Caco-2 (cell line): ENCODE measurements at regions of chr11 and their contacts with region 1.

Region 1: GRCh38 chr11:7688238-7688826 is 15.0 kb upstream of the CYB5R2 start:
- DNase-seq: peak in 1 of 2 experiments; percentile 49
- H3K4me3 ChIP-seq: no peak overlapping the region
- H3K4me3 Mint-ChIP-seq: no peak overlapping the region
- H3K27ac Mint-ChIP-seq: no peak overlapping the region
- H3K4me1 ChIP-seq: peaks cover 15% of the 10 kb centered on the region
- H3K4me1 Mint-ChIP-seq: peaks cover 20% of the 10 kb centered on the region
- H3K27me3 ChIP-seq: no peaks in the 10 kb centered on the region
- H3K27me3 Mint-ChIP-seq: no peaks in the 10 kb centered on the region
- CTCF ChIP-seq: peak; percentile 83 to 91

Region 2: DNA sequence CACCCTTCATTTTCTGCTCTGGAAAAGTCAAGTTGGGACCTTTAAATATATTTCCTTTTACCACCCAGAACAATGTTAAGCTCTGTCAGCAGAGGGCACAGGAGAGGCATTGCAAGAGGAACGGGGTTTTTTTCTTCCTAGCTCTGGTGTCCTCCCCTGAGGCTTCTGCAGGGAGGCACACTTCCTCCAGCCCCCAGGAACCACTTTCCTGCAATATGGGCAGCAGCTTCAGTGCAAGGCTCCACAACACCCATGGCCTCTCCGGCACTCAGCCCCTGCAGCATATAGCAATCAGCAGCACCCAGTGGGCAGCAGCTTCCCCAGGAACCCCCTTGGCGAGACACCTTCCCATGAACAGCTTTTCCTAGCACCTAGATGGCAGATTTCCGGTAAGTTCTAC is 335.2 kb before region 1 on chr11:
- CTCF ChIA-PET with region 1: no interaction called
- POLR2A ChIA-PET with region 1: no interaction called
- intact Hi-C with region 1: loop called (anchors 2 kb)
- DNase-seq: peak; percentile 39 to 63
- H3K4me3 ChIP-seq: no peak overlapping the region
- H3K4me3 Mint-ChIP-seq: no peak overlapping the region
- H3K27ac Mint-ChIP-seq: no peak overlapping the region
- H3K4me1 ChIP-seq: no peaks in the 10 kb centered on the region
- H3K4me1 Mint-ChIP-seq: no peaks in the 10 kb centered on the region
- H3K27me3 ChIP-seq: no peaks in the 10 kb centered on the region; the same call in 1 of the 2 replicates
- H3K27me3 Mint-ChIP-seq: peaks cover 15% of the 10 kb centered on the region
- CTCF ChIP-seq: peak; percentile 63 to 76

Region 3: GRCh38 chr11:7467652-7468051 is 220.7 kb before region 1 on chr11:
- CTCF ChIA-PET with region 1: no interaction called
- POLR2A ChIA-PET with region 1: no interaction called
- intact Hi-C with region 1: no loop called
- DNase-seq: no peak
- H3K4me3 ChIP-seq: no peak overlapping the region
- H3K4me3 Mint-ChIP-seq: no peak overlapping the region
- H3K27ac Mint-ChIP-seq: no peak overlapping the region
- H3K4me1 ChIP-seq: no peaks in the 10 kb centered on the region
- H3K4me1 Mint-ChIP-seq: no peaks in the 10 kb centered on the region
- H3K27me3 ChIP-seq: 0 out of 2 replicates have a peak, but pooled peaks cover 1% of the 10 kb centered on the region
- H3K27me3 Mint-ChIP-seq: peaks cover 12% of the 10 kb centered on the region
- CTCF ChIP-seq: no peak

Region 4: GRCh38 chr11:7672960-7673723 is 15.2 kb before region 1 on chr11 and contains the start of gene CYB5R2:
- CTCF ChIA-PET with region 1: no interaction called
- POLR2A ChIA-PET with region 1: no interaction called
- intact Hi-C with region 1: loop called (anchors 1 kb)
- DNase-seq: peak; percentile 75 to 77
- H3K4me3 ChIP-seq: peak within 1 kb of the TSS; percentile 40
- H3K4me3 Mint-ChIP-seq: peak within 1 kb of the TSS; percentile 72
- H3K27ac Mint-ChIP-seq: peak within 1 kb of the TSS; percentile 55
- H3K4me1 ChIP-seq: peaks cover 6% of the 10 kb centered on the region
- H3K4me1 Mint-ChIP-seq: peaks cover 16% of the 10 kb centered on the region
- H3K27me3 ChIP-seq: no peaks in the 10 kb centered on the region
- H3K27me3 Mint-ChIP-seq: peaks cover 2% of the 10 kb centered on the region
- CTCF ChIP-seq: no peak
- total RNA-seq, gene CYB5R2: 4.5 and 5.2 TPM in 2 replicates